ENCODE measurements at regions of chr1 and their contacts with region 1.

Region 1: GRCh38 chr1:177585622-177586129 is 384.2 kb downstream of the SEC16B start:
- DNase-seq: no peak
- ATAC-seq: no peak
- H3K4me3 ChIP-seq: no peak overlapping the region
- H3K4me3 Mint-ChIP-seq: no peak overlapping the region
- H3K27ac ChIP-seq: no peak overlapping the region
- H3K27ac Mint-ChIP-seq: no peak overlapping the region
- H3K4me1 ChIP-seq: no peaks in the 10 kb centered on the region
- H3K4me1 Mint-ChIP-seq: no peaks in the 10 kb centered on the region
- H3K27me3 ChIP-seq: no peaks in the 10 kb centered on the region
- H3K27me3 Mint-ChIP-seq: no peaks in the 10 kb centered on the region
- CTCF ChIP-seq: no peak

Region 2: DNA sequence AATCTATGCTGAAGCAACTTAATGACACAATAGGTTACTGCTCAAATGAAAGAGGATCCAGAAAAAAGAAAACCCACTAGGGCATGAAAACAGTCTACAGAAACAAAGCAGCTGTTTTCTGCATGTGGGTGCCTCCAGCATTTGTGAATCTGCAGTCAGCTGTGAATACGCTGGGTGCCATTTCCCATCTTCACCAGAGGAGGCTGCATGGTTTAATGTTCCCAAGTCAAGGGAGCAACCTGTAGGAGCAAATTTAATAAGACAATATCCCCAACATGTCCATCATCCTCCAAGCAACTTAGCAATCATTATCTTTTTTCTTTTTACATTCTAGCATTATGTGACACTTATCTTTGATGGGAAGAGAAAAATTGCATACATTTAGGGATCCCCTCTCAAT is 18.3 kb before region 1 on chr1:
- CTCF ChIA-PET with region 1: no interaction called
- POLR2A ChIA-PET with region 1: no interaction called
- intact Hi-C with region 1: no loop called
- DNase-seq: no peak
- ATAC-seq: no peak
- H3K4me3 ChIP-seq: no peak overlapping the region
- H3K4me3 Mint-ChIP-seq: no peak overlapping the region
- H3K27ac ChIP-seq: no peak overlapping the region
- H3K27ac Mint-ChIP-seq: no peak overlapping the region
- H3K4me1 ChIP-seq: no peaks in the 10 kb centered on the region
- H3K4me1 Mint-ChIP-seq: no peaks in the 10 kb centered on the region
- H3K27me3 ChIP-seq: no peaks in the 10 kb centered on the region
- H3K27me3 Mint-ChIP-seq: no peaks in the 10 kb centered on the region
- CTCF ChIP-seq: no peak

Region 3: DNA sequence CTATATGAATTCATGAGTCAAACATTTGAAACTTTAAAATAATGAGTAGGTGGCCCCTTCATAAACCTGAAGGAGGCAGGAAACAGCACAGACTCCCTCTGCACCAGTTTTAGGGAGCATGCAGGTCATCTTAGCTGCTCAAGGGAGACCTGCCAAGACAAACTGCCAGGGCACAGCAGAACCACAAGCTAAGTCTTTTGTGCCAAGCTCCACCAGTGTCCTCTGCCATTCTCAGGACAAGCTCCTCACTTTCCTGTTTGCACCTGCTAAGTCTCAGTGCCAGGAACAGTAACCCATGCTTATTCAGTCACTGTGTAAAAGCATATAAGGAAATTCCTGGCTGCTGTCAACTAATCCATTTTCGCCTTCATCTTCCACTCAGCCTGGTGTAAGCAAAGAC is 15.3 kb after region 1 on chr1:
- CTCF ChIA-PET with region 1: no interaction called
- POLR2A ChIA-PET with region 1: no interaction called
- intact Hi-C with region 1: loop called in 1 of 2 experiments (anchors 1 kb)
- DNase-seq: no peak
- ATAC-seq: no peak
- H3K4me3 ChIP-seq: no peak overlapping the region
- H3K4me3 Mint-ChIP-seq: no peak overlapping the region
- H3K27ac ChIP-seq: no peak overlapping the region
- H3K27ac Mint-ChIP-seq: no peak overlapping the region
- H3K4me1 ChIP-seq: no peaks in the 10 kb centered on the region
- H3K4me1 Mint-ChIP-seq: no peaks in the 10 kb centered on the region
- H3K27me3 ChIP-seq: no peaks in the 10 kb centered on the region
- H3K27me3 Mint-ChIP-seq: no peaks in the 10 kb centered on the region
- CTCF ChIP-seq: no peak